Tibial artery (tissue), 4 donors: ENCODE measurements at regions of chr5 and their contacts with region 1.

Region 1: GRCh38 chr5:146273109-146273508 is 65.5 kb upstream of the POU4F3 start:
- DNase-seq: no peak
- H3K4me3 ChIP-seq: no peak overlapping the region
- H3K27ac ChIP-seq: no peak overlapping the region
- H3K4me1 ChIP-seq: no peaks in the 10 kb centered on the region
- H3K27me3 ChIP-seq: no peaks in the 10 kb centered on the region
- CTCF ChIP-seq: no peak

Region 2: GRCh38 chr5:145975361-145976066 is 297.6 kb before region 1 on chr5:
- intact Hi-C with region 1: no loop called
- DNase-seq: peak; percentile 20 to 70
- H3K4me3 ChIP-seq: no peak overlapping the region
- H3K27ac ChIP-seq: peak overlapping the region; percentile 80 to 82
- H3K4me1 ChIP-seq: peaks cover 0 to 42% (median 30%) of the 10 kb centered on the region in 4 donors
- H3K27me3 ChIP-seq: no peaks in the 10 kb centered on the region
- CTCF ChIP-seq: no peak

Region 3: GRCh38 chr5:146173597-146173996 is 99.5 kb before region 1 on chr5:
- intact Hi-C with region 1: loop called (anchors 10 kb)
- DNase-seq: no peak
- H3K4me3 ChIP-seq: no peak overlapping the region
- H3K27ac ChIP-seq: no peak overlapping the region
- H3K4me1 ChIP-seq: no peaks in the 10 kb centered on the region
- H3K27me3 ChIP-seq: no peaks in the 10 kb centered on the region
- CTCF ChIP-seq: no peak

Region 4: DNA sequence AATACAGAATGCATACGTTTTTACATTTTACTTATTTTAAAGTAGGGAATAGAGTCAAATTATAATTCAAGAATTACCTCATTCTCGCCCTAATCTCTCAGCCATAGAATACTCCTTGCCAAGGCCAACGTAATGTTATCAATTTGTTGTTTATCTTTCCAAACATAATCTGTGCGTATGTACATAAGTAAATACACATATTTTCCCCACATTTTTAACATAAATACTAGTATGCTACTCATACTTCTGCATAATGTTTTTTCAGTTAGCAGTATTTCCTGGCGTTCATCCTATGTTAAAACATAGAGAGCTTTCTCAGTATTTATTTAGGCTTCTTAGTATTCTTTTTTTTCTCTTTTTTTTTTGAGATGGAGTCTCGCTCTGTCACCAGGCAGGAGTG is 40.9 kb before region 1 on chr5:
- intact Hi-C with region 1: no loop called
- DNase-seq: no peak
- H3K4me3 ChIP-seq: no peak overlapping the region
- H3K27ac ChIP-seq: peak overlapping the region; percentile 61 to 68
- H3K4me1 ChIP-seq: peaks cover 0 to 28% (median 15%) of the 10 kb centered on the region in 4 donors
- H3K27me3 ChIP-seq: no peaks in the 10 kb centered on the region
- CTCF ChIP-seq: no peak